ENCODE measurements at regions of chr6 and their contacts with region 1.

Region 1: GRCh38 chr6:110590821-110591351 is 114.5 kb upstream of the SLC22A16 start:
- DNase-seq: no peak
- H3K4me3 Mint-ChIP-seq: no peak overlapping the region
- H3K27ac Mint-ChIP-seq: peak overlapping the region; percentile 26
- H3K4me1 Mint-ChIP-seq: peaks cover 13% of the 10 kb centered on the region
- H3K27me3 Mint-ChIP-seq: no peaks in the 10 kb centered on the region

Region 2: DNA sequence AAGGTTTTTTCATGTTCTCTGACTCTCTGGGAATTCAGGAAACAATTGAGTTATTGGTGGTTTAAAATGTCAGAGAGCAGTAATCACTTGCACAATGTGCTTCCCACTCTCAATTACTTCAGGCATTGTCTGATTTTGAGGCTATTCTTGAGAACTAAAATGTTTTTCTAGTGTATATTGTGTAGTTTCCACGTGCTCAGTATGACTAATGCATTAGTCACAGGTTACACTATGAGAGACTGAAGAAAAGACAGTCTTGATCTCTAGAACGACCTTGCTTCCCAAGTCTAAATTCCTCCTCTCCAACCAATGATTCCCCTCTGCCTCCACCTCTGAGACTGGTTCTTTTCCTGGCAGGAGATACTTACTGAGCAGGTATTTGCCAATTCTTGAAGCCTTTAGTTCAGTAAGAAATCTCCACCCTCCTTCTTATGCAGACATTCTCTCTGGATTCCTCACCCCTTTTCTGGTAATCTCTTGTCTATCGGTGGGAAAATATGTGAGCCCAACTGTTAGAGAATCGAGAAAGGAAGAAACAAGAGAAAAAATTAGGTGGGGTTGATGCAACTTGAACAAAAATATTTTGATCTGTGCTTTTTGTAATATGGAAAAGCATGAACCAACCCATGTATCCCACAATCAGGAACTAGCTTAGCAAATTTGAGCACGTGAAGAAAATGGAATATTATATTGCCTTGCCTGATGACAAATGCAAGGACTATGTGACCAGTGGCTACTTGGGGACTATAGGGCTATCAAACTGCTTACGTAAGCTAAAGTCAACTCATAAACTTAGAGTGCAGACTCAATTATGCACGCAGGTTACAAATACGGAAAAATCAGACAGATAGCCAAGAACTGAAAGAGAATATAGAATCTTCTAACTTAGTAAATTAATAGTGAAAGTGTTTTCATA is 53.4 kb before region 1 on chr6:
- intact Hi-C with region 1: loop called (anchors 1 kb)
- DNase-seq: no peak
- H3K4me3 Mint-ChIP-seq: peak overlapping the region; percentile 24
- H3K27ac Mint-ChIP-seq: peak overlapping the region; percentile 76
- H3K4me1 Mint-ChIP-seq: peaks cover 30% of the 10 kb centered on the region
- H3K27me3 Mint-ChIP-seq: peaks cover 10% of the 10 kb centered on the region

Region 3: GRCh38 chr6:110554966-110555460 is 35.9 kb before region 1 on chr6:
- intact Hi-C with region 1: no loop called
- DNase-seq: no peak
- H3K4me3 Mint-ChIP-seq: no peak overlapping the region
- H3K27ac Mint-ChIP-seq: no peak overlapping the region
- H3K4me1 Mint-ChIP-seq: peaks cover 6% of the 10 kb centered on the region
- H3K27me3 Mint-ChIP-seq: peaks cover 3% of the 10 kb centered on the region

Region 4: GRCh38 chr6:110609101-110609500 is 18.2 kb after region 1 on chr6:
- intact Hi-C with region 1: no loop called
- DNase-seq: no peak
- H3K4me3 Mint-ChIP-seq: no peak overlapping the region
- H3K27ac Mint-ChIP-seq: no peak overlapping the region
- H3K4me1 Mint-ChIP-seq: no peaks in the 10 kb centered on the region
- H3K27me3 Mint-ChIP-seq: peaks cover 1% of the 10 kb centered on the region

Measured in activated CD4-positive, alpha-beta T cell treated with anti-CD3 and anti-CD28 coated beads, Interleukin-2, amount 10 ng/mL, durations not matched to agents 24 days and 14 days (primary cell).